HCT116 (cell line): ENCODE measurements at regions of chr10 and their contacts with region 1.

Region 1: GRCh38 chr10:71383972-71384687 is 12.6 kb upstream of the CDH23 start:
- DNase-seq: no peak
- ATAC-seq: peak; percentile 98
- H3K4me3 ChIP-seq: no peak overlapping the region
- H3K27ac ChIP-seq: no peak overlapping the region
- H3K4me1 ChIP-seq: peaks cover 0 to 2% of the 10 kb centered on the region in 2 experiments; a peak in 1 of 4 replicates
- H3K27me3 ChIP-seq: no peaks in the 10 kb centered on the region; the same call in 1 of the 2 replicates
- CTCF ChIP-seq: peak; percentile 90 to 97 (median 96)
- POLR2A ChIP-seq: no peak
- RAD21 ChIP-seq: peak; percentile 92

Region 2: GRCh38 chr10:71569775-71570588 is 185.9 kb after region 1 on chr10:
- CTCF ChIA-PET with region 1: interaction called, 11 read pairs
- POLR2A ChIA-PET with region 1: no interaction called
- RAD21 ChIA-PET with region 1: interaction called in 1 of 2 experiments, 4 read pairs
- intact Hi-C with region 1: loop called (anchors 1 kb)
- DNase-seq: peak; percentile 18
- ATAC-seq: peak; percentile 82
- H3K4me3 ChIP-seq: no peak overlapping the region
- H3K27ac ChIP-seq: no peak overlapping the region
- H3K4me1 ChIP-seq: no peaks in the 10 kb centered on the region
- H3K27me3 ChIP-seq: 0 out of 2 replicates have a peak, but pooled peaks cover 3% of the 10 kb centered on the region
- CTCF ChIP-seq: peak; percentile 67 to 88 (median 83)
- POLR2A ChIP-seq: no peak
- RAD21 ChIP-seq: peak; percentile 79

Region 3: DNA sequence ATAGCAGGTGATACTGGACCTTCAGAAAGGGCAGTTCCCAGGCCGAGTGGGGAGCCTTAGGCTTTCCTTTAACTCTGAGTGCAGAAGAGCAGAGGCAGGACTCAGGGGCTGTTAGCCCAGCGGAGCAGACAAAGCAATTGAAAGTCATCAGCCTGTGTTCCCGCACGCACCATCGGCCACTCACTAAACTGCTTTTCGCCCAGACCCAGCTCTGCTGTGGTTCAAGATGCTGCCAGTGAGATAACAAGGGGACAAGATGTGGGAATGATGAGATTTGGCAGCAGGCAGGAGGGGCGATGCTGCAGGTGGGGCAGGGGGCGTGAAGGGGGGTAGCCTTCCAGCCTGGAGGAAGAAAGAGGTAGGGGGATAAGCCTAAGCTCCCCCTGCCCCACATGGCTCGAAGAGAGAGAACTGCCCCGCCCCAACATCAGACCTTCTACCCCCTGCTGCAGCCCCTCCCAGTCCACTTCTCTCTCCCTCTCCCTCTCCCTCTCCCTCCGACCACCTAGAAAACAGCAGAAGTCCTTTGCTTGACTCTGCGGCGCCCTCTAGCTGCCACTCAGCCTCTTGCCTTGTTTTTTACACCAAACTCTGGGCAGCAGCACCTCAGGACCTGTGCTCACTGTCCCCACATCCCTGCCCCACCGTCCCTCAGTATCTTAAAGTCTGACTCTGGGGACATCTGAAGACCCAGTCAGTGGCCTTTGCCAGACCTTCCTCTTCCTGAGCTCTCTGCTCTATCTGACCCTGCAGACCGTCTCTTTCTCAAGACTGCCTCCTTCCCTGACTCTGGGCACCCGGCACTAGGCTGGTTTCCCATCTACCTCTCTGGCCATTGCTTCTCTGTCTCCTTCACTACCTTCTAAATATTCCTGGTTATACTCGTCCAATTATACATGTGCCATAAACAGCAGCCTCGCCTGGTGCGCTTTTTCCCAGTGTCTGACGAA is 225.0 kb after region 1 on chr10:
- CTCF ChIA-PET with region 1: interaction called, 4 read pairs
- POLR2A ChIA-PET with region 1: no interaction called
- RAD21 ChIA-PET with region 1: no interaction called
- intact Hi-C with region 1: loop called (anchors 1 kb)
- DNase-seq: peak; percentile 49
- ATAC-seq: peak; percentile 75
- H3K4me3 ChIP-seq: no peak overlapping the region
- H3K27ac ChIP-seq: no peak overlapping the region
- H3K4me1 ChIP-seq: peaks cover 11 to 27% of the 10 kb centered on the region in 2 experiments
- H3K27me3 ChIP-seq: no peaks in the 10 kb centered on the region
- CTCF ChIP-seq: peak; percentile 59 to 94 (median 88)
- POLR2A ChIP-seq: no peak
- RAD21 ChIP-seq: peak; percentile 75

Region 4: GRCh38 chr10:71623098-71623985 is 239.2 kb after region 1 on chr10:
- CTCF ChIA-PET with region 1: no interaction called
- POLR2A ChIA-PET with region 1: no interaction called
- RAD21 ChIA-PET with region 1: no interaction called
- intact Hi-C with region 1: loop called (anchors 5 kb)
- DNase-seq: no peak
- ATAC-seq: peak; percentile 78
- H3K4me3 ChIP-seq: no peak overlapping the region
- H3K27ac ChIP-seq: no peak overlapping the region
- H3K4me1 ChIP-seq: peaks cover 23 to 28% of the 10 kb centered on the region in 2 experiments
- H3K27me3 ChIP-seq: no peaks in the 10 kb centered on the region
- CTCF ChIP-seq: peak in 2 of 3 experiments; percentile 27 to 33; a peak in 3 of 6 replicates
- POLR2A ChIP-seq: no peak
- RAD21 ChIP-seq: peak; percentile 40

Region 5: DNA sequence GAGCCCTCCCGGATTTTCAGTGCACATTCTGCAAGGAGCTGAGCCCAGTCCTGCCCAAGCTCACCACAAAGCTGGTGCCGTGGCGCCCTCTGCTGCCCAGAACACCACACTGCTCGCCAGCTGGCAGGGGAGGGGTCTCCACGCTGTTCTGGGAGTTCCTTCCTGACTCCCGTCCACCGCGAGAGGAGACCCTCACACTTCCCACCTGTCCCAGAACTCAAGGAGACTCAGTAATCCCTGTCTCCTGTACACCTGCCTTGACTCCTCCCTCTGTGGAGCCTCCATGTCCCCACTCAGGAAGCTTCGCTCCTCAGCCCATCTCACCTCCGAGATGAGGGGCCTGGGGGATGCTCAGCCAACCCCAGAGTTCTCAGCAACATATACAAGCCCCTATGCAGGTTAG is 324.2 kb after region 1 on chr10:
- CTCF ChIA-PET with region 1: interaction called, 19 read pairs
- POLR2A ChIA-PET with region 1: no interaction called
- RAD21 ChIA-PET with region 1: interaction called, 3 to 5 read pairs
- intact Hi-C with region 1: loop called (anchors 1 kb)
- DNase-seq: no peak
- ATAC-seq: peak; percentile 87
- H3K4me3 ChIP-seq: no peak overlapping the region
- H3K27ac ChIP-seq: no peak overlapping the region
- H3K4me1 ChIP-seq: 0 out of 4 replicates have a peak, but pooled peaks cover 0 to 4% of the 10 kb centered on the region in 2 experiments
- H3K27me3 ChIP-seq: no peaks in the 10 kb centered on the region
- CTCF ChIP-seq: peak; percentile 77 to 93 (median 89)
- POLR2A ChIP-seq: no peak
- RAD21 ChIP-seq: peak; percentile 93

Region 6: DNA sequence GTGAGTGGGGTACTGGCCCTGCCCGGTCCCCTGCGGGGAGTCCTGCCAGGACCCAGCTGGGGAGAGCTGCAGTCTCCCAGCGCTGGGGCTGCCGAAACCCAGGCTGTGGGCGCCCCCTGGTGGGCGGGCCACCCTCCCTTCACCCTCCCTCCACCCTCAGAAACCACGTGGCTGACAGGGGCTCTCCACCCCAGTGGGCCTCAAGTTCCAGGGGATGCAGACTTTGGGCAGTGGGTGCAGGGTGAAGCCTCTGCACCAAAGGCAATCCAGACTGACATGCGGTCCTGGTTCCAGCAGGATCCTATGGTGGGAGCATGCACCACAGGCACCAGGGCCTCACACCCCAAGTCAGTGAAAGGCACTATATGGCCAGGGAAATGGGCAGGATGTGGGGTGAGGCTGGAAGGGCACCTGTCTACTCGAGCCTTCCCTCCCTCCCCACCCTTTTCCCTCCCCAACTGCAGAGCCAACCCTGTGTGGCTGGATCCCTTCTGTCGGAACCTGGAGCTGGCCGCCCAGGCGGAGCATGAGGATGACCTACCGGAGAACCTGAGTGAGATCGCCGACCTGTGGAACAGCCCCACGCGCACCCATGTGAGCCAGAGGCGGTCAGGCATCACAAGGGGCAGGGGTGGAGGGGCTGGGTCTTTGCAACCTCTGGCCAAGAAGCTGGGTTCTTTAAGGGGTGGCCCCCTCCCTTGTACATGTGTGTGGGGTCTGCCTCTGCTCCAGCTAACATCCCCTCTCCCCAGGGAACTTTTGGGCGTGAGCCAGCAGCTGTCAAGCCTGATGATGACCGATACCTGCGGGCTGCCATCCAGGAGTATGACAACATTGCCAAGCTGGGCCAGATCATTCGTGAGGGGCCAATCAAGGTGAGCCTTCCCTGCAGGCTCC is 428.1 kb after region 1 on chr10:
- CTCF ChIA-PET with region 1: interaction called, 3 read pairs
- POLR2A ChIA-PET with region 1: no interaction called
- RAD21 ChIA-PET with region 1: no interaction called
- intact Hi-C with region 1: loop called (anchors 5 kb)
- DNase-seq: peak; percentile 10
- ATAC-seq: peak; percentile 95
- H3K4me3 ChIP-seq: no peak overlapping the region
- H3K27ac ChIP-seq: no peak overlapping the region
- H3K4me1 ChIP-seq: peaks cover 0 to 13% of the 10 kb centered on the region in 2 experiments; a peak in 2 of 4 replicates
- H3K27me3 ChIP-seq: no peaks in the 10 kb centered on the region
- CTCF ChIP-seq: peak; percentile 88 to 92 (median 89)
- POLR2A ChIP-seq: no peak
- RAD21 ChIP-seq: peak; percentile 96

Region 7: GRCh38 chr10:71899665-71900412 is 515.7 kb after region 1 on chr10:
- CTCF ChIA-PET with region 1: no interaction called
- POLR2A ChIA-PET with region 1: no interaction called
- RAD21 ChIA-PET with region 1: interaction called in 1 of 2 experiments, 4 read pairs
- intact Hi-C with region 1: loop called (anchors 5 kb)
- DNase-seq: no peak
- ATAC-seq: no peak
- H3K4me3 ChIP-seq: no peak overlapping the region
- H3K27ac ChIP-seq: no peak overlapping the region
- H3K4me1 ChIP-seq: no peaks in the 10 kb centered on the region
- H3K27me3 ChIP-seq: no peaks in the 10 kb centered on the region
- CTCF ChIP-seq: no peak
- POLR2A ChIP-seq: no peak
- RAD21 ChIP-seq: no peak